ENCODE measurements at regions of chr12 and their contacts with region 1.

Region 1: GRCh38 chr12:94459728-94460615 is at the start of gene CEP83:
- DNase-seq: peak; percentile 100
- H3K4me3 Mint-ChIP-seq: peak within 1 kb of the TSS; percentile 98
- H3K27ac Mint-ChIP-seq: peak within 1 kb of the TSS; percentile 98
- H3K4me1 Mint-ChIP-seq: peaks cover 29% of the 10 kb centered on the region
- H3K27me3 Mint-ChIP-seq: peaks cover 4% of the 10 kb centered on the region
- total RNA-seq, gene CEP83: 36.9 and 38.7 TPM in 2 replicates

Region 2: DNA sequence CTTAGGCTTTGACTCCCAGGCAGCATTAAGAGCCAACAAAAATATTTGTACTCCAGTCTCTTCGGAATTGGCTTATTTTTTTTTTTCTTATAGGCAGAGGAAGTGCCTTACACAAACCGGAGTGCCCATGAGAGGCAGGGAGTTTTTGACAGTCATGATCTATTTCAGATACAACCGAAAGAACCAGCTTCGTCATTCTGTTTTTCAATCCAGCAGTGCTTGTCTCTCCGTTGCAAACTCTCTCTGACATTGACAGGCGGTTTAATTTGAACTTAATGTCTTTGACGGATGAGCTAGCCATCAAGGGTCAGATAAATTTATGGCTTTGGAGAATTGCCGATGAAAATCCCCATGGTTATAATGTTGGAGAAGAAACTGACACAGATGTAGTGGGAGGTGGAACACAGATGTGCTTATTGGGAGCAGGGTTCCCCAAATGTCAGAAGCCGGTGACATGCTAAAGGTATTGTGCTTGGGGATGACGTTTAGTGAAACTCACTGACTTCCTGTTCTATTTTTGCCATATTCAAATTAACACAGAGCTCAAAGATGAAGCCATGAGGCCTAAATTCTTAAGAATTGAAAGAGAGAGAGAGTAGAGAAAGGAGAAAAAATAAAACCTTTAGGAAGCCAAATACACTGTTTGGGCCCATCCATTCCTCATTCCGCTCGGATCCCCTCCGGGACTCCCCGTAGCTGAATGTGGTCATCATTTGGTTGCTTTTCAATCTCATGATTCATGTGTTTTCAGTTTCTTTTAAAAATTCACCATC is 251.9 kb before region 1 on chr12:
- intact Hi-C with region 1: loop called (anchors 1 kb)
- DNase-seq: peak; percentile 84
- H3K4me3 Mint-ChIP-seq: peak overlapping the region; percentile 84
- H3K27ac Mint-ChIP-seq: peak overlapping the region; percentile 95
- H3K4me1 Mint-ChIP-seq: peaks cover 59% of the 10 kb centered on the region
- H3K27me3 Mint-ChIP-seq: no peaks in the 10 kb centered on the region

Region 3: GRCh38 chr12:94326727-94327126 is 133.2 kb before region 1 on chr12:
- intact Hi-C with region 1: loop called (anchors 5 kb)
- DNase-seq: no peak
- H3K4me3 Mint-ChIP-seq: no peak overlapping the region
- H3K27ac Mint-ChIP-seq: peak overlapping the region; percentile 65
- H3K4me1 Mint-ChIP-seq: peaks cover 24% of the 10 kb centered on the region
- H3K27me3 Mint-ChIP-seq: no peaks in the 10 kb centered on the region

Region 4: DNA sequence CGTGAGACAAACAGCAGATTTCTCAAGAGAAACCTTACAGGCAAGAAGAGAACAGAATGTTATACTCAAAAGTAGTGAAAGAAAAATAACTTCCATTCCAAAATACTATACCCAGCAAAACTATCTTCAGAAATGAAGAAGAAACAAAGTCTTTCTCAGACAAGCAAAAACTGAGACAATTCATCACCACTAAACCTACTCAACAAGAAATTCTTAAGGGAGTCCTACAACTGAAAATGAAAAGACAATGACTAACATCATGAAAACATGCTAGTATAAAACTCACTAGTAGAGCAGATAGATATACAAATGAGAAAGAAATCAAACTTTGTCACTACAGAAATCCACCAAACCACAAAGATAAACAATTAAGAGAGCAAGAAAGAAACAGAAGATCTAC is 106.8 kb before region 1 on chr12:
- intact Hi-C with region 1: no loop called
- DNase-seq: no peak
- H3K4me3 Mint-ChIP-seq: no peak overlapping the region
- H3K27ac Mint-ChIP-seq: peak overlapping the region; percentile 7
- H3K4me1 Mint-ChIP-seq: peaks cover 3% of the 10 kb centered on the region
- H3K27me3 Mint-ChIP-seq: no peaks in the 10 kb centered on the region

Region 5: GRCh38 chr12:94427501-94428381 is 32.2 kb before region 1 on chr12:
- intact Hi-C with region 1: loop called (anchors 2 kb)
- DNase-seq: no peak
- H3K4me3 Mint-ChIP-seq: no peak overlapping the region
- H3K27ac Mint-ChIP-seq: peak overlapping the region; percentile 68
- H3K4me1 Mint-ChIP-seq: peaks cover 7% of the 10 kb centered on the region
- H3K27me3 Mint-ChIP-seq: no peaks in the 10 kb centered on the region

Region 6: DNA sequence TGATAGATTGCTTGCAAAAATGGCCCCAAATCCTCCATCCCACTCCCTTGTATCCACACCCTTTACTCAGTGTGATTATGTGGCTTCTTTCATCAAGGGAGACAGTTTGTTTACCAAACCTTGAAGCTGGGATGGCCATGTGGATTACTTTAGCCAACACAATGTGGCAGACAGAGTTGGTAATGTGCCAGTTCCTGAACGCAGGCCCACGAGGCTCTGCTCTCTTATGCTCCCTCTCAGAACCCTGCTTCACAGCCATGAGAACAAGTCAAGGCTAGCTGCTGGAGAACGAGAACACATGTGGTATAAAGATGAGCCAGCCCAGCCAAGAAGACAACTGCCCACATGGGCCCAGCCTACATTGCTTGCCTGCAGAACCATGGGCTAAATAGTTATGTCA is 381.2 kb after region 1 on chr12:
- intact Hi-C with region 1: no loop called
- DNase-seq: no peak
- H3K4me3 Mint-ChIP-seq: no peak overlapping the region
- H3K27ac Mint-ChIP-seq: no peak overlapping the region
- H3K4me1 Mint-ChIP-seq: no peaks in the 10 kb centered on the region
- H3K27me3 Mint-ChIP-seq: peaks cover 7% of the 10 kb centered on the region

Region 7: DNA sequence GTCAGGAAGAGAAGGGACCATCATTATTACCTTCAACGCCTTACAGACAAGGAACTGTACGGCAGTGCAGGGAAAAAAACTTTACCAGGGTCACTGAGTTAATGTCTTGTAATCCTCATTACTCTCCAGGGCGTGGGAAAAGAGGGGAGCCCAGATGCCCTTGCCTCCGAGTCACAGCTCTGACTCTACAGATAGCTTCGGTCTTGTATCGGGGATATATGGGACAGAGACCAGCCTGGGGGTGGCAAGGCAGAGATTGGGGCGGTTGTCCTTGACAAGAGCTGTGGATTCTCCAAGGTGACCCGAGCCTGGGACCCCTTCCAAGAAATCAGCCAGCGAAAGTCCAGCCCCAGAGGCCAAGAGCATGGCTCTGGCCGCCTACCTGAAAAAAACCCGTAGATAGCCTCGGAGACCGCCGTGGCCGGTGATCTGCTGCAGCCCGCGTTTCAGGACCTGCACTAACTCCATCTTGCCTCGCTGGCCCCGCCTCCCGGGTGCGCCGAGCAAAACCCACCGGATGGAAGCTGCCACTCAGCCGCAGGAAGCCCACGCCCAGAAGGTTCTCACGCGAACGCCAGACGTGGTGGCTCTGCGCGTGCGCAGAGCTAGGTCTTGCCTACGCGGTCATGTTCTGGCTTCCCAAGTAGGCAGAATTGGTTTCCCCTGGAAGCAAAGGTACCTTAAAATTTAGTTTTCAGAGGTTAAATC is 543.4 kb after region 1 on chr12 and contains the start of gene NDUFA12:
- intact Hi-C with region 1: loop called (anchors 10 kb)
- DNase-seq: peak; percentile 99
- H3K4me3 Mint-ChIP-seq: peak within 1 kb of the TSS; percentile 95
- H3K27ac Mint-ChIP-seq: peak within 1 kb of the TSS; percentile 92
- H3K4me1 Mint-ChIP-seq: peaks cover 31% of the 10 kb centered on the region
- H3K27me3 Mint-ChIP-seq: peaks cover 1% of the 10 kb centered on the region
- total RNA-seq, gene NDUFA12: 111 and 116 TPM in 2 replicates

Measured in activated CD4-positive, alpha-beta T cell treated with anti-CD3 and anti-CD28 coated beads, Interleukin-2, amount 10 ng/mL, durations not matched to agents 24 days and 14 days (primary cell).